Ascending aorta (tissue), 2 donors: ENCODE measurements at regions of chr1 and their contacts with region 1.

Region 1: DNA sequence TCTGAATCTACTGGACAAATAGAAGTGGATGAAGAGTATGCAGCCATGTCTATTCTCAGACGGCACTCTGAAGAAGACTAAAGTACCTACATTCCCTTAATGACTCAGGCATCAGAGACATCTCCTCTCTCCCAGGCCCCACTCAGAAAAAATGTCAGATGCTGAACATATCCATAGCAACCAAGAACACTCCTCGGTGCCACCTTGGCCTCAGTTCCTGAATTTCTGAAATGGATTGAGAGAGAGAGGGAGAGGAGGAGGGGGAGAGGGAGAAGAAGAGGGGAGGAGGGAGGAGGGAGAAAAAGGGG is 16.0 kb upstream of the OVAAL start:
- DNase-seq: peak in 1 of 2 donors; percentile 78
- H3K4me3 ChIP-seq: no peak overlapping the region
- H3K27ac ChIP-seq: peak overlapping the region; percentile 73 to 81
- H3K4me1 ChIP-seq: peaks cover 3 to 37% of the 10 kb centered on the region in 2 donors
- H3K27me3 ChIP-seq: no peaks in the 10 kb centered on the region
- CTCF ChIP-seq: no peak

Region 2: GRCh38 chr1:180462102-180462501 is 80.7 kb before region 1 on chr1:
- intact Hi-C with region 1: no loop called
- DNase-seq: no peak
- H3K4me3 ChIP-seq: no peak overlapping the region
- H3K27ac ChIP-seq: no peak overlapping the region
- H3K4me1 ChIP-seq: no peaks in the 10 kb centered on the region
- H3K27me3 ChIP-seq: no peaks in the 10 kb centered on the region
- CTCF ChIP-seq: no peak

Region 3: DNA sequence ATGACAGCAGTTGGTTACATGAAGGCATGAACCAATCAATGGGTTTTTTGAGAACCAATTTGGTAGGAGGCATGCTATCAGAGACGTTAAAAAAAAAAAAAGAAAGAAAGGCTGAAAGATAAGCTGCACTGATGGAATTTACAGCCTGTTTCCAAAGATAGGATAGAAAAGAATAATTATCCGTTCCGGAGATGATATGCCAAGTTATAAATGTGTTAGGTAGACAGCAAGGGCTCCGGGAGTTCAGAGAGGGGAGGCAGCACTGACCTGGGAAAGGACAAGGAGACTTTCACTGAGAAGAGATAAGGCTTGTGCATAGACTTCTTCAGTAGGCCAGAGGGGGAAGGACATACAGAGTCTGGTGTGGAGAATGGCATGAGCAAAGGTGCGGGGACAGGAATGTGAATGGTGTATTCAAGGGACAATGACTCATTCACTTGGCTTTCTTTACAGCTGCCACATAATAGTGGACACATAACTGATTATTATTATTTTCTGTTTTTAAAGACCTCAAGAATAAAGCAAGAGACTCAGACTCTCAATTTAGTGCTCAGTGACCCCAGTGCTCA is 15.6 kb before region 1 on chr1:
- intact Hi-C with region 1: loop called (anchors 2 kb)
- DNase-seq: no peak
- H3K4me3 ChIP-seq: no peak overlapping the region
- H3K27ac ChIP-seq: peak overlapping the region; percentile 80 to 83
- H3K4me1 ChIP-seq: peaks cover 13 to 37% of the 10 kb centered on the region in 2 donors
- H3K27me3 ChIP-seq: no peaks in the 10 kb centered on the region
- CTCF ChIP-seq: no peak

Region 4: DNA sequence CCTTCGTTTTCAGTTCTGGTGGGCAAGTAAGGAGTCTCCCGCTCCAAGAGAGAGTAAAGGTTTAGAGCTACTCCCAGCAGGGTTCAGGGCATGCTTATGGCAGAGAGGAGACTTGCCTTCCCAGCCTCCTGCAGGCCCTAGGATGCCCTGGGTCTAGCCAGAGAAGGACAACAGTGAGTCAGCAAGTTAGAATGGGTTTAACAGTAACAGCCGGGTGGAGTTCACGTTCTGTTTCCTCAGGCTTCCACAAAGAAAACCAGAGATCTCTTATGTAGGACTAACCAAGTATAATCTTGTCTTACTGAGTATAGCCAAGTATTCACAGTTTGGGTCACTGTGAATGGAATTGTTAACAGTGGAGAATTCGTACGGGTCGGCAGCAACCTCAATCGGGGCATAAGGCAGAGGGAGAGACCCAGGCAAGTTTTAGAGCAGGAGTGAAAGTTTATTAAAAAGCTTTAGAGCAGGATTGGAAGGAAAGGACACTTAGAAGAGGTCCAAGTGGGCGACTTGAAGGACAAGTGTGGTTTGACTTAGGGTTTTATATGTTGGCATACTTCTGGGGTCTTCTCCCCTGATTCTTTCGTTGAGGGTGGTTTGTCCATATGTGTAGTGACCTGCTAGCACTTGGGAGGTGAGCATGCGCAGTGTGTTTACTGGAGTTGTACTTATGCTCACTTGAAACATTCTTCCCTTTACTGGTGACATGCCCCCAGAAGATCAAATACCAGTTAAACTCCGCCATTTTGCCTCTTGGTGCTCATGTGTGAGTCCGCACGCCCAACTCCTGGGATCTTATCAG is 20.4 kb after region 1 on chr1:
- intact Hi-C with region 1: loop called (anchors 2 kb)
- DNase-seq: no peak
- H3K4me3 ChIP-seq: no peak overlapping the region
- H3K27ac ChIP-seq: peak overlapping the region; percentile 47 to 76
- H3K4me1 ChIP-seq: peaks cover 8 to 25% of the 10 kb centered on the region in 2 donors
- H3K27me3 ChIP-seq: no peaks in the 10 kb centered on the region
- CTCF ChIP-seq: no peak

Region 5: DNA sequence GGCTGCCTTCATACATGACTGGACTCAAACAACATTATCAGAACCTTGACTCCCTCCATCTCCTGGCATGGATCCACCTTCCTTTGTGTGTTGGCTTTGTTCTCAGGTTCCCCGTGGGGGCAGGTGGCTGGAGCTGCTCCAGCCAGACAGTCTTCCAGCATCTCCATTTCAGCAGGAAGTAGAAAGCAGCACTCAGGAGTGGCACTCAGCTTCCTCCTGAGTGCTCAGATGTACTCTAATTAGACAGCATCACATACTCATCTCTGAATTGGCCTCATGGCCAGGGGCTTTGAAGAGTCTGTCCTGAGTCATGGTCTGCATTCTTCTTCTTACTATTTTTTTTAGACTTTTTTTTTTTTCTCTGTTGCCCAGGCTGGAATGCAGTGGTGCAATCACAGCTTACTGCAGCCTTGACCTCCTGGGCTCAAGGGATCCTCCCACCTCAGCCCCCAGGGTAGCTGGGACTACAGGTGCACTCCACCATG is 43.9 kb after region 1 on chr1:
- intact Hi-C with region 1: loop called (anchors 1 kb)
- DNase-seq: no peak
- H3K4me3 ChIP-seq: no peak overlapping the region
- H3K27ac ChIP-seq: peak overlapping the region in 1 of 2 donors; percentile 53
- H3K4me1 ChIP-seq: peaks cover 6 to 9% of the 10 kb centered on the region in 2 donors
- H3K27me3 ChIP-seq: no peaks in the 10 kb centered on the region
- CTCF ChIP-seq: no peak

Region 6: GRCh38 chr1:180598333-180598974 is 55.7 kb after region 1 on chr1:
- intact Hi-C with region 1: no loop called
- DNase-seq: no peak
- H3K4me3 ChIP-seq: no peak overlapping the region
- H3K27ac ChIP-seq: no peak overlapping the region
- H3K4me1 ChIP-seq: no peaks in the 10 kb centered on the region
- H3K27me3 ChIP-seq: no peaks in the 10 kb centered on the region
- CTCF ChIP-seq: no peak

Region 7: DNA sequence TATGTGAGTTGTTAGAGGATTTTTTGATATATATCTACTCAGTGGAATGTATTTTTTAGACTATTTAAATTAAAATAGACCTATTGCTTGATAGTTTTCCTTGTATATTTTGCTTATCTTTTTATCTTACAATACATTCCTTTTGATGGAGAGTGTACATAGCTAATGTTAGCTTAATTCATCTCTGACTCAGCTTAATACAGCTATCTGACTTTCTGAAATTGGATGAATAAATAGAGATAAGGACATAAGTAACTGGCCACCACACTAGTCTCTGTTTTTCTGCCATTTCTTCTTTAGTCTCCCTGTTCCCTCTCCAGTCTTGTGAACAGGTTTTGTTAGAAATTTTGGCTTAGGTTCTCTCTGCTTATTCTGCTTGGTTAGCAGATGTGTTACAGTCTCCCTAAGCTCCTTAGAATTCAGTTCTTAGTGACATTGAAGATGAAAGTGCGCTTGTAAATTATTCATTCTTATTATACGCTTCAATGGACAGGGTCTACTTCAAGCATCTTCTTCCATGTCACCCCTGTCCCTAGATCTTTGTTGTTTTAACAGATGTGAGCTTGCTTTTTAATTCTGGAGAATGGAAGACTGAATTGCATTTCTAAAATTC is 148.6 kb after region 1 on chr1:
- intact Hi-C with region 1: no loop called
- DNase-seq: no peak
- H3K4me3 ChIP-seq: no peak overlapping the region
- H3K27ac ChIP-seq: no peak overlapping the region
- H3K4me1 ChIP-seq: peaks cover 0 to 4% of the 10 kb centered on the region in 2 donors
- H3K27me3 ChIP-seq: no peaks in the 10 kb centered on the region
- CTCF ChIP-seq: no peak